Esophagus muscularis mucosa (tissue), 4 donors: ENCODE measurements at regions of chr12 and their contacts with region 1.

Region 1: DNA sequence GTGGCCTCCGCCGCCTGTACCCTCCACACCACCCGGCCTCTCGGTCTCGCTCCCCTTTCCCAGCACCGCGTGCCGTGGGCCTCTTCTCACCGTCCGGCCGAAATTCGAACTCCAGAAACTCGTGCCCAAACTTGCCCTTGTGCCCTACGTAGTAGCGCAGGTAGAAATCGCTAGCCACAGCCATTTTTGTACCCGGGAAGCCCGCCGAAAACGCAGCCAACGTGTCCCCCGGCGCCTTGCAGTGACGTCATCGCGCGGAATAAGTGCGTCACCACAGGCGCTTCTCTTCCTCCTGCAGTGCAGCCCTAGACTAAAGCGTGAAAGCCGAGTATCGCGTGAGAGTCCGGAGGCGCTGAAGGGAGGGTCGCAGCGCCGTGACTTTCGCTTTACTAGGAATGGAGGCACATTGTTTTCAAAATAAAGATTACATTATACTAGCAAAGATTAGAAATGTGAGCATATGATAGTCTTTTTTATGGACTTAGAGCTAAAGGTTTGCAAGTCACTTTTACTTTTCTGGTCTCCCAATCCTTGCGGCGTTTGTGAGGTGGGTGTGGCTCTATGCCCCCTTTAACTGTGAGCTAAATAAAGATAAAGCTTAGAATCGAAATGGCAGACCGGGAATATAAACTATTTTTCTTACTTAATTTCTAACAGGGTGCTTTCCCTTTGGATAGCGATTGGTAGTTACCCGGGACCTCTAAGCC is at the start of gene MAGOHB:
- DNase-seq: peak; percentile 99
- H3K4me3 ChIP-seq: peak within 1 kb of the TSS; percentile 72 to 81 (median 78)
- H3K27ac ChIP-seq: peak within 1 kb of the TSS; percentile 84 to 93 (median 86)
- H3K4me1 ChIP-seq: peaks cover 0 to 23% (median 21%) of the 10 kb centered on the region in 4 donors
- H3K27me3 ChIP-seq: no peaks in the 10 kb centered on the region
- CTCF ChIP-seq: peak in 2 of 3 experiments; percentile 20 to 26
- EP300 ChIP-seq: no peak
- POLR2A ChIP-seq: peak; percentile 46
- total RNA-seq, gene MAGOHB: 10.0 to 14.2 (median 11.3) TPM

Region 2: GRCh38 chr12:10673660-10674384 is 60.3 kb after region 1 on chr12 and contains the start of gene STYK1:
- intact Hi-C with region 1: no loop called
- DNase-seq: no peak
- H3K4me3 ChIP-seq: peak within 1 kb of the TSS; percentile 40 to 60 (median 49)
- H3K27ac ChIP-seq: no peak within 1 kb of the TSS
- H3K4me1 ChIP-seq: peaks cover 9 to 13% (median 10%) of the 10 kb centered on the region in 4 donors
- H3K27me3 ChIP-seq: peaks cover 0 to 33% (median 9%) of the 10 kb centered on the region in 4 donors
- CTCF ChIP-seq: peak; percentile 41 to 64 (median 56)
- EP300 ChIP-seq: no peak
- POLR2A ChIP-seq: no peak
- total RNA-seq, gene STYK1: 0.50 to 1.2 TPM in 2 of 4 donors, not detected in the others

Region 3: GRCh38 chr12:10721651-10722501 is 108.4 kb after region 1 on chr12:
- intact Hi-C with region 1: loop called (anchors 5 kb)
- DNase-seq: peak; percentile 99
- H3K4me3 ChIP-seq: peak overlapping the region; percentile 89 to 97 (median 94)
- H3K27ac ChIP-seq: peak overlapping the region; percentile 96 to 98 (median 98)
- H3K4me1 ChIP-seq: peaks cover 34 to 58% (median 55%) of the 10 kb centered on the region in 4 donors
- H3K27me3 ChIP-seq: no peaks in the 10 kb centered on the region
- CTCF ChIP-seq: no peak
- EP300 ChIP-seq: peak; percentile 92
- POLR2A ChIP-seq: peak; percentile 65

Region 4: DNA sequence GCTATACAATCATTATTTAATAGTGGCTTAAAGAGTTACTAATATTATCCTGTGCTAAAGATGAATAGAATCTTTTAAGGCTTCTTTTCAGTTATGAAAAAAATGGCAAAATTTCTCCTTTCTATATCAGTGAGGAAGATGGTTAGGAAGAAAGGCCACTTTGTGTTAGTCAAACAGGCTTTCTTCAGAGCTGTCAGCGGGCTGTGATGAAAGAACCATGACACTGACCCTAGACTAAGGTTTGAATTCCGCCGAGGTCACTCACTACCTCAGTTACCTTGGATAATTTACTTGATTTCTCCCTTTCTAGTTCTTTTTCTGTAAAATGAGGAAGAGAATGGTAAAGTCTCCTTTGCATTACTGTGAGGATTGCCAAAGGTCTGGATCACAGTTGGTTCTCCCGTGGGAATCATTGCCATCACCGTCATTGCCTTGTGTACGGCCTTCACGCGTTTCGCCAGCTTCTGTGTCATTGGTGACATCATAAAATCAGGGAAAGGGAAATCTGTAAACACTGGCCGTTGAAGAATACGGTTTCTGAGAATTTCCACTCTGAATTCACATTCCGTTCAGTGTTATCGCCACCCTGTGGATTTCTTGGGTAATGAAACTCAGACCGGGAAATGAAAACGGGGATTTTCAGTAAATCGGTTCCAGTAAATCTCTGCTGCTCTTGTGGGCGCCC is 136.3 kb after region 1 on chr12:
- intact Hi-C with region 1: loop called (anchors 2 kb)
- DNase-seq: peak; percentile 95
- H3K4me3 ChIP-seq: peak overlapping the region; percentile 34 to 51 (median 44)
- H3K27ac ChIP-seq: peak overlapping the region; percentile 41 to 73 (median 66)
- H3K4me1 ChIP-seq: peaks cover 4 to 11% (median 8%) of the 10 kb centered on the region in 4 donors
- H3K27me3 ChIP-seq: peaks cover 0 to 11% (median 0%) of the 10 kb centered on the region in 4 donors
- CTCF ChIP-seq: peak; percentile 95 to 97 (median 96)
- EP300 ChIP-seq: peak; percentile 83
- POLR2A ChIP-seq: no peak

Region 5: GRCh38 chr12:11085419-11085818 is 471.9 kb after region 1 on chr12:
- intact Hi-C with region 1: no loop called
- DNase-seq: no peak
- H3K4me3 ChIP-seq: no peak overlapping the region
- H3K27ac ChIP-seq: no peak overlapping the region
- H3K4me1 ChIP-seq: no peaks in the 10 kb centered on the region
- H3K27me3 ChIP-seq: no peaks in the 10 kb centered on the region
- CTCF ChIP-seq: no peak
- EP300 ChIP-seq: no peak
- POLR2A ChIP-seq: no peak